Common myeloid progenitor, CD34-positive (primary cell): ENCODE measurements at regions of chr3 and their contacts with region 1.

Region 1: DNA sequence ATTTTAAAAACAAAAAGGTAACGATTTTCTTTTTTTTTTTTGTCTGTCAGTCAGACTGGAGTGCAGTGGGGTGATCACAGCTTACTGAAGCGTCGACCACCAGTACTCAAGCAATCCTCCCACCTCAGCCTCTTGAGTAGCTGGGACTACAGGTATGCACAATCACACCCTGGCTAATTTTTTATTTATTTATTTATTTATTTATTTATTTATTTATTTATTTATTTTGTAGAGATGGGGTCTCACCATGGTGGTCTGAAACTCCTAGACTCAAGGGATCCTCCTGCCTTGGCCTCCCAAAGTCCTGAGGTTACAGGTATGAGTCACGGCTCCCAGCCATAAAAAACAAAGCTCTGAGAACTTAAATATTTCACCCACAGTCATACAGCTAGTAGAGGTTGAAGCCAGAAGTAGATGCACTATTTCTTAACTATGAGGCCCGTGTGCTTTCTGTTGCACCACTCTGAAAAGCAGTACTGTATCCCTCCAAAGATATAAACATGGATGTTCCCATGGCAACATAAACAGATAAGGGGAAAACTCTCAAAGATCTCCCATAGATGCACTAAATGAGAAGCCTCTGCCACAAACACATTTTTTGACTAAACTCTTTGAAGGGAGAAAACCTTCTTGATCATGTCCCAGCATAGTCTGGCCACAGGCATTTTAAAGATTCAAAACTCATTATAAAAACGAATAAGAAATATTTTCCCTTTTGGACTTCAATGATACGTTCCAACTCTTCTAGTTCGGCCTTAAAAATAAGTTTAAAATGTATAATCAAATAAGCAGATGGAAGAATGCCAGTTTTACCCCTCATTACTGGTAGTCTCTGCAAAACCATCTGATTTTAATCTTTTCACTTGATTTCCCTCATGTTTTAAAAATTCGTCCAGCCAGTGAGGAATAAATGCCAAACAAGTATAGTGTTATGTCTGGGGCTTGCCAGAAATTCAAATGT is 162.3 kb upstream of the ARHGEF26 start:
- DNase-seq: peak in 2 of 3 donors; percentile 4 to 12
- H3K4me3 ChIP-seq: no peak overlapping the region
- H3K27ac ChIP-seq: no peak overlapping the region
- H3K4me1 ChIP-seq: no peaks in the 10 kb centered on the region
- H3K27me3 ChIP-seq: no peaks in the 10 kb centered on the region

Region 2: DNA sequence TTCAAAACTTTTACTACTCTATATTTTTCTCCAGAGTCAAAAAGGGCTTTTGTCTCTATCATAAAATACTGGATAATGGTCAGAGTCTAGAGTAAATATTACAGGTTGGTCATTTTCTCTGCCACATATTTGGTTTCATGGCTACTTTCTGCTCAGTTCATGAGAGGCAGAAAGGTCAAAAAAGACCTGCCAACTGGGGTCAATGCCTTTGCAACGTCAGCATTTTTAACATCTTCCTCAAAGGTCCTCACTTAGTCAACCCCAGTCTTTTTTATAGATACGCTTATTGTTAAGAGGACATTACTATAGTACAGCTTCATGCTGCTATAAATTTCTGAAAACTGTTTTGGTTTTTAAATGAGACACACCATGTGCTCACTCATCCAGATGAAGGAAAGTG is 149.8 kb before region 1 on chr3:
- CTCF ChIA-PET with region 1: no interaction called
- POLR2A ChIA-PET with region 1: no interaction called
- DNase-seq: no peak
- H3K4me3 ChIP-seq: no peak overlapping the region
- H3K27ac ChIP-seq: no peak overlapping the region
- H3K4me1 ChIP-seq: no peaks in the 10 kb centered on the region
- H3K27me3 ChIP-seq: no peaks in the 10 kb centered on the region

Region 3: GRCh38 chr3:153925841-153926514 is 32.9 kb before region 1 on chr3:
- CTCF ChIA-PET with region 1: no interaction called
- POLR2A ChIA-PET with region 1: no interaction called
- DNase-seq: no peak
- H3K4me3 ChIP-seq: no peak overlapping the region
- H3K27ac ChIP-seq: no peak overlapping the region
- H3K4me1 ChIP-seq: no peaks in the 10 kb centered on the region
- H3K27me3 ChIP-seq: no peaks in the 10 kb centered on the region

Region 4: GRCh38 chr3:153970741-153971347 is 11.9 kb after region 1 on chr3:
- CTCF ChIA-PET with region 1: interaction called, 10 read pairs
- POLR2A ChIA-PET with region 1: no interaction called
- DNase-seq: peak; percentile 27 to 52 (median 42)
- H3K4me3 ChIP-seq: no peak overlapping the region
- H3K27ac ChIP-seq: no peak overlapping the region
- H3K4me1 ChIP-seq: no peaks in the 10 kb centered on the region
- H3K27me3 ChIP-seq: no peaks in the 10 kb centered on the region